Right ventricle myocardium superior (tissue), 1 donor: ENCODE measurements at regions of chr22 and their contacts with region 1.

Region 1: DNA sequence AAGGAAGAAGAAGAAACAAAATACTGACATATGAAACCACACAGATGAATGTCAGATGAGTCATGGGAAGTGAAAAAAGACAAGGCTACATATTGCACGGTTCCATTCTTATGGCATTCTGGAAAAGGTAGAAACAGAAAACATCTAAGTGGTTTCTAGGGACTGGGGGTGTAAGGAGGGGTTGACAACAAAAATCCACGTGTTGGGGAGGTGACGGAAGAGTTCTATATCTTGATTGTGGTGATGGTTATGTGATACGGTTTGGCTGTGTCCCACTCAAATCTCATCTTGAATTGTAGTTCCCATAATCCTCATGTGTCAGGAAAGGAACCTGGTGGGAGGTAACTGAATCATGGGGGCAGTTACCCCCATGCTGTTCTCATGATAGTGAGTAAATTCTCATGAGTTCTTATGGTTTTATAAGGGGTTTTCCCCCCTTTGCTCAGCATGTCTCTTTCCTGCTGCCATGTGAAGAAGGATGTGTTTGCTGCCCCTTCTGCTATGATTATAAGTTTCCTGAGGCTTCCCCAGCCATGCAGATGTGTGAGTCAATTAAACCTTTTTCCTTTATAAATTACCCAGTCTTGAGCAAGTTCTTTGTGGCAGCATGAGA is 6.4 kb upstream of the ARFGAP3 start:
- DNase-seq: no peak
- ATAC-seq: no peak

Region 2: DNA sequence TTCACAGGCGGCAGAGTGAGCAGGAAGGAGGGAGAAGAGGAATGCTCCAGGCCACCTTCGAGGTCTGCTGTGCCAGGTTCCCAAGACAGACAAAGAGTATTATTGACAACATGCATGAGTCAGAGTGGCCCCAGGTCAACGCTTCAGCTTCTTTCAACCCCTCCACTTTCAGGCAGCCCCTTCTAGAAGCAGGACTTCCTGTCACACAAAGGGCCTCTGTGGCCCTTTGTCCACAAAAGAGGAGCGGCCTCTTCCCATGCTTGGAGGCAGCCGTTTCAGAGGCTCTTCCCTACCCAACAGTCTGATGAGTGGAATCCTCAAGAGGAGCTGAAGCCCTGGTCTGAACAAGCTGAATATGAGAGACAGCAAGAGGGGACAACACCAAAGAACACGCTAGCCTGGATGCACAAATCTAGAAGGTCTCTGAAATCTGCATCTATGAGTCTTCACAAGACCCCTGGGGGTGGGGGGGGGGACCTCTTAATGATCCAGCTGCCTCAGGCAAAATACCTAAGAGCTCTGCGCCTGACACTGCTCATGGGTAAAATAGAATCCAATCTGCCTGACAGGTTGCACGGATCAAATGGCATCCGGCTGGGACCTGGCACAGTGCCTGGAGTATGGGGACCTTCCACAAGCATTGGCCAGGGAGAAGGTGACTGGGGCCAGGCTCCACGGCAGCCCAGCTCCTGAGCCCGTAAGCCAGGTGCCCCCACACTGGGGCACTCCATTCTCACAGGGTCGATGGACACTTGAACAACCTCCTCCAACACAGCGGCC is 83.9 kb after region 1 on chr22:
- intact Hi-C with region 1: no loop called
- DNase-seq: peak; percentile 76
- ATAC-seq: peak; percentile 57

Region 3: DNA sequence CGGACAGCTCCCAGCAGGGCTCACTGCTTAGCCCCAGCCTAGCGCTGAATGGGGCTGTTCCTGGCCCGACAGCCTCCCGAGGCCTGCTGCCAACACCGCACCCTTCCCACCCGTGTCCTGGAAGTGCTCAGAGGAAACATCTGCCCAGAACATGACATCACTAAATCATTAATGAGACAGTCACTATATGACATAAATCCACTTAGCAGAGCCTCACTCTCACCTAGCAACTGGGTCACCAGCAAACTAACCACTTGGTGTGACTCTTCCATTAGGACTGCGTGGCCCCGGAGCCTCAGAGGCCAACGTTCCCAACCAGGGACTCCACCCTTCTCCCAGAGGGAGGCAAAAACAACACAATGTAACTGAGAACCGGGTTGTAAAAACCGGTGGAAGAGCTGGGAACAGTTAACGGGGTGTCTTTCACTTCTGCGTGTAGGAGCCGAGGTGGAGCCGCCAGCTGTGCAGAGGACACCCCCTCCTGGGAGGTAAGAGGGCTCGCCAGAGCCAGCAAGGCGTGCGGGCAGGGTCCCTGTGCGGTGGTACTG is 172.9 kb after region 1 on chr22:
- intact Hi-C with region 1: loop called (anchors 10 kb)
- DNase-seq: peak; percentile 85
- ATAC-seq: peak; percentile 86